B cell (primary cell): ENCODE measurements at regions of chr22 and their contacts with region 1.

Region 1: DNA sequence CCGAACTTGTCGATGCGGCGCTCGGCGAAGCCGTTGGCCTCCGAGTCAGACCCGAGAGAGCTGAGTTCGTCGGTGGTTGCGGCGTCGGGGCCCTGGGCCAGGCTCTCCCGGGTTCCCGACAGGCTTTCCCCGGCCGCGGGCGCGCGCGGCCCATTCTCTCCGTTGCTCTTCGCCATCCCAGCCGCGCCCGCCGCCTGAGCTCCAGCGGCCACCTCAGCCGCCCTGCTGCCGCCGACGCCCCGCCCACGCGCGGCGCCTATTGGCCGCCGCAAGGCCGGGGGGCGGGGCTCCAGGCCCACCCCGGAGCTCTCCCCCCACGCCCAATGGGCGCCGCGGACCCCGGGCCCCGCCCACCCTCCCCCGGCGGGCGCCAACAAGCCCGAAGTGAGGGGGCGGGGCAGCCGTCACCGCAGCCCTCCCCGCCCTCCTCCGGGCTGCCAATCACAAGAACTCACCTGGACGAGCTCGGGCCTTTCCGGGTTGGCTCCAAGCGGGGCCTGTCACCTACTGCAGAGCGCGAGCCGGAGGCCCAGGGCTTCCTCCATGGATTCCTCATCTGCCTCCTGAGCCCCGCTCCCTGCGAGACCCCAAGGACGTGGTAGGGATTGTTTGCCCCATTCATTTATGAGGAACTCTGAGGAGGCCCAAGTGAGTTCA is at the start of gene TBC1D10A:
- DNase-seq: peak; percentile 95
- ATAC-seq: peak; percentile 96
- H3K4me3 ChIP-seq: peak within 1 kb of the TSS; percentile 40 to 92 (median 83)
- H3K4me3 Mint-ChIP-seq: peak within 1 kb of the TSS; percentile 86
- H3K27ac ChIP-seq: peak within 1 kb of the TSS; percentile 57 to 88
- H3K27ac Mint-ChIP-seq: peak within 1 kb of the TSS; percentile 93
- H3K4me1 ChIP-seq: peaks cover 30 to 43% of the 10 kb centered on the region in 2 donors
- H3K4me1 Mint-ChIP-seq: peaks cover 49% of the 10 kb centered on the region
- H3K27me3 ChIP-seq: no peaks in the 10 kb centered on the region
- H3K27me3 Mint-ChIP-seq: no peaks in the 10 kb centered on the region
- CTCF ChIP-seq: no peak
- total RNA-seq, gene TBC1D10A: 44.7 and 45.2 TPM in 2 replicates

Region 2: GRCh38 chr22:30127749-30128166 is 199.1 kb before region 1 on chr22:
- CTCF ChIA-PET with region 1: no interaction called
- POLR2A ChIA-PET with region 1: no interaction called
- intact Hi-C with region 1: no loop called
- DNase-seq: no peak
- ATAC-seq: no peak
- H3K4me3 ChIP-seq: no peak overlapping the region
- H3K4me3 Mint-ChIP-seq: no peak overlapping the region
- H3K27ac ChIP-seq: no peak overlapping the region
- H3K27ac Mint-ChIP-seq: no peak overlapping the region
- H3K4me1 ChIP-seq: no peaks in the 10 kb centered on the region
- H3K4me1 Mint-ChIP-seq: no peaks in the 10 kb centered on the region
- H3K27me3 ChIP-seq: no peaks in the 10 kb centered on the region
- H3K27me3 Mint-ChIP-seq: peaks cover 18% of the 10 kb centered on the region
- CTCF ChIP-seq: no peak

Region 3: GRCh38 chr22:30305519-30305905 is 21.3 kb before region 1 on chr22:
- CTCF ChIA-PET with region 1: interaction called, 33 read pairs
- POLR2A ChIA-PET with region 1: interaction called, 22 read pairs
- intact Hi-C with region 1: loop called (anchors 1 kb)
- DNase-seq: peak; percentile 75
- ATAC-seq: peak; percentile 59
- H3K4me3 ChIP-seq: peak overlapping the region; percentile 17 to 55 (median 43)
- H3K4me3 Mint-ChIP-seq: peak overlapping the region; percentile 80
- H3K27ac ChIP-seq: peak overlapping the region; percentile 73 to 86
- H3K27ac Mint-ChIP-seq: peak overlapping the region; percentile 89
- H3K4me1 ChIP-seq: peaks cover 100% of the 10 kb centered on the region in 2 donors
- H3K4me1 Mint-ChIP-seq: peaks cover 99% of the 10 kb centered on the region
- H3K27me3 ChIP-seq: no peaks in the 10 kb centered on the region
- H3K27me3 Mint-ChIP-seq: no peaks in the 10 kb centered on the region
- CTCF ChIP-seq: no peak